Right cardiac atrium (tissue), 5 donors: ENCODE measurements at regions of chr1 and their contacts with region 1.

Region 1: DNA sequence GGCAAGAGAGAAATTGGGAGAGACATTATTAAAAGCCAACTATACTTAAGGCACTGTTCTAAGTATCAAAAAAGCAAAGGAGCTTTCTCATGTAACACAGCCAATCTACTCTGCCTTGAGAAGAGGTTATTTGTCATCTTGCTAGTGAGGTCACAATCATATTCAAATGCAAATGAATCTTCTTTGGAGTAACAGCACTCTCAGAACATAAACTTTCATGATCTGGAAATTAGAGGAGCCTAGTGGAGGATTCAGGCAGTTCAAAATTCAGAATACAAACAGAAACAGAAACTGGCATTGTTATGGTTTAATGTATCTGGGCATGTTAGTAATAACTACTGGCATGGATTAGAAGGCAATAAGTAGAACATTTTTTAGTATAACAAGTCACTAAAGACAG is 57.4 kb downstream of the ARID4B start:
- DNase-seq: no peak
- ATAC-seq: no peak
- H3K4me3 ChIP-seq: no peak overlapping the region
- H3K27ac ChIP-seq: no peak overlapping the region
- H3K4me1 ChIP-seq: peaks cover 4% of the 10 kb centered on the region
- H3K27me3 ChIP-seq: no peaks in the 10 kb centered on the region

Region 2: DNA sequence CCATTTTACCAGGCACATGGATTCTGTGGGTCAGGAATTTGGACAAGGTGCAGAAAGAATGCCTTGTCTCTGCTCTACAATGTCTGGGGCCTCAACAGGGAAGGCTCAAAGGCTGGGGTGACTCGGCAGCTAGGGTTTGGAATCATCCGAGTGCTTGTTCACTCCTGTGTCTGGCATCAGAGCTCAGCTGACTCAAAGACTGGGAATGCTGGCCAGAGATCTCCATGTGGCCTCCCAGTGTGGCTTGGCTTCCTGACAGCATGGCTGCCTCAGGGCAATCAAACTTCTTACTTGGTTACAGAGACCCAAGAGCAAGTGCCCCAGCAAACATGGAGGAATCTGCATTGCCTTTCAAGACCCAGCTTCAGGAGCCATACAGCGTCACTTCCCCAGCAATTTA is 252.5 kb before region 1 on chr1:
- intact Hi-C with region 1: no loop called
- DNase-seq: no peak
- ATAC-seq: no peak
- H3K4me3 ChIP-seq: no peak overlapping the region
- H3K27ac ChIP-seq: no peak overlapping the region
- H3K4me1 ChIP-seq: no peaks in the 10 kb centered on the region
- H3K27me3 ChIP-seq: no peaks in the 10 kb centered on the region

Region 3: DNA sequence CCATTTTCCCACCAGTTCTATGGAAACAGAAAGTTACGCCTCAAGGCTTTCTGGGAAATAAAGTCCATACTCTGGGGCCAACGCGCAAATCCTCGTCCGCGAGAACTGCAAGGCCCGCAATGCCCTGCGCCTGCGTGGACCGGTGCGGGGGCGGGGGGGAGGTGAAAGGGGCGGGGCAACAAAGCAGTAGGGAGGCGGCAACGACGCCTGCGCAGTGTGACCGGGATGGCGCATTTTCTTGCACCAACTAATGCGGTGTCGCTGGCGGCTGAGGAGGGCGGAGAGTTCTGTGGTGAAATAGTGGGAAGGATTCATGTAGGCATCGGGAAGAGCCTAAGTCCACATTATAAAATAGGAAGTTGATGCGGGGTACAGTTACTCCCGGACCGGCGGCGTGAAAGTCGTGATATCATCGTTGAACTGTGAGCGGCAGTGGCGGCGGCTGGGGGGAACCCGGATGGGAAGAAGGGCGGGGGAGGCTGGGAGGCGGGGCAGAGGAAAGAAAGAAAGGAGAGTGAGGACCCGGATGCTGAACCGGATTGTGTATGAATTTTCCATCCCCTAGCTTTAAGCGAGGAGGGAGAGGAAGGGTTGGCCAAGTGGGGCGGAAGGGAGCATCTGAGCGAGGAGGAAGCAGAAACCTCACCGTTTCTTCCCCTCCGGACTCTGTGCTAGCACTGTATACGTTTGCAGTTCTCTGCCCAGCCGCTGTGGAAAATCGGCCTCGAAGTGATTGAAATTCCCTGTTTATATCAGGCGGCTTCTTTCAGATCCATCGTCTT is 57.9 kb after region 1 on chr1 and contains the start of gene GGPS1:
- intact Hi-C with region 1: loop called in 1 of 4 experiments (anchors 10 kb)
- DNase-seq: peak; percentile 97 to 99 (median 99)
- ATAC-seq: peak; percentile 96
- H3K4me3 ChIP-seq: peak within 1 kb of the TSS; percentile 97
- H3K27ac ChIP-seq: peak within 1 kb of the TSS; percentile 98
- H3K4me1 ChIP-seq: no peaks in the 10 kb centered on the region
- H3K27me3 ChIP-seq: no peaks in the 10 kb centered on the region
- total RNA-seq, gene GGPS1: 29.7 to 33.5 (median 31.0) TPM